AG04449 (cell line): ENCODE measurements at regions of chr19 and their contacts with region 1.

Region 1: DNA sequence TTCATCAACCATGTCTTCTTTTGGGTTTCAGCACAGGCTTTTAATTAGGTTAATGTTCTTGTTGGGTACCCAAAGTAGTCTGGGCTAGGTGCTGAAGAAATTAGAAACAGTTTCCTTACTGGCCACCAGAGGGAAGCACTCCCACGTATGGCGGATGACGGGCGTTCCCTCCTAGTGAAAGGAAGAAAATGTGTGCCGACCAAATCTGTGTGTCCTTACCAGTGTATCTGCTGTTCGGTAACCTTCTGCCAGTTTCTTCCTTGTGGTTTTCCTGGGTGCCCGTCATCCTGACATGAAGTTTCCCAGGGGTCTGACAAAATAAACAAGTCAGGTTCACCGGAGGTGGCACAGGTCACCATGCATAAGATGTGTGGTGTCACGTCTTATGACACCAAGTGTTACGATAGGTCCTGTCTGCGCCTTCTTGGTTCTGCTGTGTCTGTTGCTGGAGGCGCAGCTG is 6.0 kb upstream of the WDR88 start:
- DNase-seq: no peak
- H3K4me3 ChIP-seq: no peak overlapping the region
- CTCF ChIP-seq: peak; percentile 82

Region 2: GRCh38 chr19:32971715-32972540 is 154.0 kb before region 1 on chr19 and contains the starts of genes CEP89 and FAAP24:
- CTCF ChIA-PET with region 1: interaction called, 89 read pairs
- POLR2A ChIA-PET with region 1: no interaction called
- DNase-seq: peak; percentile 95
- H3K4me3 ChIP-seq: peak within 1 kb of the TSS; percentile 84
- CTCF ChIP-seq: no peak

Region 3: DNA sequence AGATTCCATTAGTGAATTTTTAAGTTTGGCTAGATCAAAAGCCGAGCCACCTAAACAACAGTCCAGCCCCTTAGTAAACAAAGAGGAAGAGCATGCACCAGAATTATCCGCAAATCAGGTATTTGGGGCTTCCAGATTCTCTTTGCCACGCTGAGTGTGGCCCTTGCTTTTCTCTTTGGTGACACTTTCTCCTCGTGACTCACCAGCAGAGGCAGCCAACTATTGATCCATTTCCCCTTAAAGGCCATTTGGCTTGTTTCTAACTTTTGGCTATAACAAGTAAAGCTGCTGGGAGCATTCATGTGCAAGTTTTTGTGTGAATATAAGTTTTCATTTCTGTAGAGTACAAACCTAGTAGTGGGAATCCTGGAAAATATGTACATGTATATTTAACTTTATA is 11.7 kb before region 1 on chr19:
- CTCF ChIA-PET with region 1: interaction called, 20 read pairs
- POLR2A ChIA-PET with region 1: no interaction called
- DNase-seq: no peak
- H3K4me3 ChIP-seq: no peak overlapping the region
- CTCF ChIP-seq: no peak

Region 4: GRCh38 chr19:33143897-33144405 is 18.0 kb after region 1 on chr19:
- CTCF ChIA-PET with region 1: interaction called, 24 read pairs
- POLR2A ChIA-PET with region 1: interaction called, 3 read pairs
- DNase-seq: no peak
- H3K4me3 ChIP-seq: no peak overlapping the region
- CTCF ChIP-seq: peak; percentile 97

Region 5: GRCh38 chr19:33176670-33177416 is 50.9 kb after region 1 on chr19:
- CTCF ChIA-PET with region 1: interaction called, 25 read pairs
- POLR2A ChIA-PET with region 1: interaction called, 3 read pairs
- DNase-seq: peak; percentile 91
- H3K4me3 ChIP-seq: peak overlapping the region; percentile 72
- CTCF ChIP-seq: peak; percentile 10

Region 6: DNA sequence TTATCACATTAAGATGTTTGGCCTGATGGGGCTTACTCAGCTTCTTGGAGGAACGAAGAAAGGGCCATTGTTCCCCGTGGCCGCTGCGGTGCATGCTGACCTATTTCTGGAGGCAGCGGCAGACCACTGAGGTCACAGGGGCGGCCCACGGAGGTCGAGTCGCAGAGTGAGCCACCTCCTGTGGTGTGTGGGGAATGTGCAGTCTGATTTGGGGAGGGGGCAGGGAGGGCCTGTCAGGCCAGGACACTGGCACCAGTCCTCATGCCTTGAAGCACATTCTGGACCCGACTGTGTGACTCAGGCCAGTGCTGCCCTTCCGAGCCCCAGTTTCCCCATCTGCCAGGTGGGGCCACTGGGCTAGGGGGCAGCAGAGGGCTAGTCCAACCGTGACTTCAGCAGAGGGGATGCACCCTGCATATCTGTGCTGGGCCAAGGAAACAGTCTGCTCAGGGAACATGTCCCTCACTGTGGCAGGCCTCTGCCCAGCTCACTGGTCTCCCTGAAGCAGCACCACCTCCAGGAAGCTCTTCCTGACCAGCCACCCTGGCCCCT is 93.4 kb after region 1 on chr19:
- CTCF ChIA-PET with region 1: no interaction called
- POLR2A ChIA-PET with region 1: no interaction called
- DNase-seq: no peak
- H3K4me3 ChIP-seq: no peak overlapping the region
- CTCF ChIP-seq: peak; percentile 19

Region 7: DNA sequence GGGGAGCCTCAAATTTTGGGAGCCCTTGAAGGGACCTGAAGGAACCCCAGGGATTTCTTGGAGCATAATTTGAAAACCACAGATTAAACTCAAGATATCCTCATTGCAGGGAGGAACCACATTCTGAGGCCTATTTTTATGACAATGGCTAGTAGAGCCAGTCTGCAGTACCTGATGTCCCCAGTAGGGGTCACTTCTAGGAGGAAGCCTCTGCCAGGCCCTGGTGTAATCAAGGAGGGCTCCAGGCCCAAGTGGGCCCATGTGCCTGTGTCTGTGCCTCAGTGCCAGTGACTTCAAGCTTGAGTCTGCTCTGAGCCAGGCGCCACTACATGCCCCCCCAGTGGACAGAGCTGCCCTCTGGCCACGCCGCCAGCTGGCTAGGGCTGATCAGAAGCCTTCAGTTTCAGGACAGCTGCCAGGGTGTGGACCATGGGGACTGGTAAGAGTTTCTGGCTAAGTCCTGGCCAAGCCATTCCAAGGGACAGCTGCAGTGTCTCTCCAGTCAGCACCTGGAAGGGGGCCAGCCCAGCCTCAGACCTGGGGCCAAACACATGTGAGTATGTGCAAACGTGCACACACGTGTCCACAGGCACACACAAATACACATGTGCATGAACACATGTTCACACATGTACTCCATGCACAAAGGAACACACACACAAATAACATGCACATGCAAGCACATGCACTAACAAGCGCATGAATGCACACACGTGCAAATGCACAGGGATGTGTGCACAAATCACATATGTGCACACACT is 120.2 kb after region 1 on chr19:
- CTCF ChIA-PET with region 1: no interaction called
- POLR2A ChIA-PET with region 1: no interaction called
- DNase-seq: no peak
- H3K4me3 ChIP-seq: no peak overlapping the region
- CTCF ChIP-seq: peak; percentile 19